Activated CD4-positive, alpha-beta memory T cell treated with anti-CD3 and anti-CD28 coated beads for 36 hours (primary cell): ENCODE measurements at regions of chr13 and their contacts with region 1.

Region 1: GRCh38 chr13:28138012-28138755 is at the start of gene PAN3:
- DNase-seq: peak; percentile 94
- H3K4me3 Mint-ChIP-seq: peak within 1 kb of the TSS; percentile 91
- H3K27ac Mint-ChIP-seq: peak within 1 kb of the TSS; percentile 98
- H3K4me1 Mint-ChIP-seq: peaks cover 41% of the 10 kb centered on the region
- H3K27me3 Mint-ChIP-seq: no peaks in the 10 kb centered on the region
- total RNA-seq, gene PAN3: 26.0 to 28.3 TPM

Region 2: DNA sequence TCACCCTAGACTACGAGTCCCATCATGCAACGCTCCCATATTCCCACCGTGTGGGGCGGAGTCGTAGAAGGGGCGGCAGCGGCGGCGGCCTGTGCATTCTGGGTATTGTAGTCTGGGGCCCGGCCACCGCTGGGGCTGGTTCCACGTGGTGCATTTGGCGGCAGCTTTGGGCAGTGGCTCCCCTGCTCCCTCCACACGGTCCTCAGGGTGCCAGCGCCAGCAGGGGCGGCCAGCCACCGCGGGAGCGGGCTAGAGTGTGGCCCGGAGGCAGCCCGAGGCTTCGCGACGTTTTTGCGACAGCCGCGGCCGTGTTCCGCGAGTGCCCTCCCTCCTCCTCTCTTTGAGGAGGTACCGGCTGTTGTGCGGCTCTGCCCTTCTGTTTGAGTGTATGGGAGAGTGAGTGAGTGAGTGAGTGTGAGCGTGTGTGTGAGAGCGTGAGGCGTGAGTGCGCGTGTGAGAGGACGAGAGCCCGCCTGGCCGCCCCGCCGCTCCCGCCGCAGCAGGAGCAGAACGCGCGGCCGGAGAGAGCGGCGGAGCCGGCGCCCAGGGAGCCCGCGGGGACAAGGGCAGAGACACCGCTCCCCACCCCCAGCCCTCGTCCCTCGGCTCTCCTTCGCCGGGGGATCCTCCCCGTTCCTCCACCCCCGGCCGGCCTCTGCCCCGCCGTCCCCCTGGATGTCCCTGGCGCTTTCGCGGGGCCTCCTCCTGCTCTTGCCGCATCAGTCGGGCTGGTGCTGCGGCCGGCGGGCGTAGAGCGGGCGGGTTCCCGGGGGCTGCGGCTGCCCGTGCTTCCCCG is 1884.2 kb before region 1 on chr13 and contains the start of gene CDK8:
- CTCF ChIA-PET with region 1: no interaction called
- POLR2A ChIA-PET with region 1: no interaction called
- intact Hi-C with region 1: loop called (anchors 5 kb)
- DNase-seq: peak; percentile 91
- H3K4me3 Mint-ChIP-seq: peak within 1 kb of the TSS; percentile 84
- H3K27ac Mint-ChIP-seq: peak within 1 kb of the TSS; percentile 67
- H3K4me1 Mint-ChIP-seq: peaks cover 37% of the 10 kb centered on the region
- H3K27me3 Mint-ChIP-seq: no peaks in the 10 kb centered on the region
- total RNA-seq, gene CDK8: 14.6 to 15.0 TPM

Region 3: GRCh38 chr13:27251166-27252091 is 886.8 kb before region 1 on chr13 and contains the start of gene RPL21:
- CTCF ChIA-PET with region 1: no interaction called
- POLR2A ChIA-PET with region 1: no interaction called
- intact Hi-C with region 1: loop called (anchors 5 kb)
- DNase-seq: peak; percentile 92
- H3K4me3 Mint-ChIP-seq: peak within 1 kb of the TSS; percentile 94
- H3K27ac Mint-ChIP-seq: peak within 1 kb of the TSS; percentile 95
- H3K4me1 Mint-ChIP-seq: peaks cover 48% of the 10 kb centered on the region
- H3K27me3 Mint-ChIP-seq: no peaks in the 10 kb centered on the region
- total RNA-seq, gene RPL21: 1,539 to 1,545 TPM

Region 4: GRCh38 chr13:27449936-27450828 is 688.0 kb before region 1 on chr13 and contains the start of gene MTIF3:
- CTCF ChIA-PET with region 1: no interaction called
- POLR2A ChIA-PET with region 1: no interaction called
- intact Hi-C with region 1: loop called (anchors 1 kb)
- DNase-seq: peak; percentile 97
- H3K4me3 Mint-ChIP-seq: peak within 1 kb of the TSS; percentile 90
- H3K27ac Mint-ChIP-seq: peak within 1 kb of the TSS; percentile 95
- H3K4me1 Mint-ChIP-seq: peaks cover 57% of the 10 kb centered on the region
- H3K27me3 Mint-ChIP-seq: no peaks in the 10 kb centered on the region
- total RNA-seq, gene MTIF3: 35.7 to 37.3 TPM

Region 5: DNA sequence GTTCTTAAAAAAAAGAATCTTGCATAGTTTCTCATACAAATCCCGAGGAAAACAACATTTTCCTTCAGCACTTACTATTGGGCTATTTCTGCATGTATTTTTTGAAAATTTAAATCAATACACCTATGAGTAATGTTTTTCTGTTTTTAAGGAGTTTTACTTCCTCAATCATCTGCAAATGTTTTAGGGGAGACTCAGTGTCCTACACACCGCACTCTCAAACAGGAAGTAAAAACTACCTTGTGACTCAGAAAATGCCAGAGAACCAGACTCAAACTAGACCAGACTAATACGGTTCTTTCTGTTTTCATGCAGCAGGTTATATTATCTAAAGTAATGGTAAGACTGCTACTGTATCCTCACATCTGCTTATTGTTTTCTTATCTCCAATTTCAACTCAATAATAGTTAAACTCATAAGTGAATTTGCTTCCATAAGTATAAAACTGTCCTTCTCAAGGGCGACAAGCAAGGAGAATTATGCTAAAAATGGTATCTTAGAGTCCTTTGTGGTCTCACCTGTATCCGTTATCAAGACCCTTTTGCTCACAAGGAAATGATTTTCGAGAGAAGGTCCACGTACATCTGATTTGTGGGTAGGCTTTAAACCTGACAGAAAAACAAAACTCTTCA is 90.3 kb before region 1 on chr13:
- CTCF ChIA-PET with region 1: no interaction called
- POLR2A ChIA-PET with region 1: no interaction called
- intact Hi-C with region 1: loop called (anchors 5 kb)
- DNase-seq: no peak
- H3K4me3 Mint-ChIP-seq: no peak overlapping the region
- H3K27ac Mint-ChIP-seq: no peak overlapping the region
- H3K4me1 Mint-ChIP-seq: peaks cover 20% of the 10 kb centered on the region
- H3K27me3 Mint-ChIP-seq: peaks cover 2% of the 10 kb centered on the region

Region 6: GRCh38 chr13:28077231-28077630 is 61.0 kb before region 1 on chr13:
- CTCF ChIA-PET with region 1: no interaction called
- POLR2A ChIA-PET with region 1: no interaction called
- intact Hi-C with region 1: no loop called
- DNase-seq: no peak
- H3K4me3 Mint-ChIP-seq: no peak overlapping the region
- H3K27ac Mint-ChIP-seq: no peak overlapping the region
- H3K4me1 Mint-ChIP-seq: no peaks in the 10 kb centered on the region
- H3K27me3 Mint-ChIP-seq: peaks cover 6% of the 10 kb centered on the region

Region 7: GRCh38 chr13:28181413-28181812 is 43.2 kb after region 1 on chr13:
- CTCF ChIA-PET with region 1: no interaction called
- POLR2A ChIA-PET with region 1: no interaction called
- intact Hi-C with region 1: no loop called
- DNase-seq: no peak
- H3K4me3 Mint-ChIP-seq: no peak overlapping the region
- H3K27ac Mint-ChIP-seq: no peak overlapping the region
- H3K4me1 Mint-ChIP-seq: peaks cover 21% of the 10 kb centered on the region
- H3K27me3 Mint-ChIP-seq: no peaks in the 10 kb centered on the region

Region 8: GRCh38 chr13:28204690-28205443 is 66.7 kb after region 1 on chr13:
- CTCF ChIA-PET with region 1: no interaction called
- POLR2A ChIA-PET with region 1: no interaction called
- intact Hi-C with region 1: loop called (anchors 1 kb)
- DNase-seq: peak; percentile 77
- H3K4me3 Mint-ChIP-seq: no peak overlapping the region
- H3K27ac Mint-ChIP-seq: no peak overlapping the region
- H3K4me1 Mint-ChIP-seq: peaks cover 32% of the 10 kb centered on the region
- H3K27me3 Mint-ChIP-seq: no peaks in the 10 kb centered on the region

Region 9: GRCh38 chr13:28658796-28659620 is 520.8 kb after region 1 on chr13 and contains the start of gene POMP:
- CTCF ChIA-PET with region 1: no interaction called
- POLR2A ChIA-PET with region 1: no interaction called
- intact Hi-C with region 1: loop called (anchors 2 kb)
- DNase-seq: peak; percentile 96
- H3K4me3 Mint-ChIP-seq: peak within 1 kb of the TSS; percentile 94
- H3K27ac Mint-ChIP-seq: peak within 1 kb of the TSS; percentile 98
- H3K4me1 Mint-ChIP-seq: peaks cover 51% of the 10 kb centered on the region
- H3K27me3 Mint-ChIP-seq: no peaks in the 10 kb centered on the region
- total RNA-seq, gene POMP: 123 to 125 TPM

Region 10: DNA sequence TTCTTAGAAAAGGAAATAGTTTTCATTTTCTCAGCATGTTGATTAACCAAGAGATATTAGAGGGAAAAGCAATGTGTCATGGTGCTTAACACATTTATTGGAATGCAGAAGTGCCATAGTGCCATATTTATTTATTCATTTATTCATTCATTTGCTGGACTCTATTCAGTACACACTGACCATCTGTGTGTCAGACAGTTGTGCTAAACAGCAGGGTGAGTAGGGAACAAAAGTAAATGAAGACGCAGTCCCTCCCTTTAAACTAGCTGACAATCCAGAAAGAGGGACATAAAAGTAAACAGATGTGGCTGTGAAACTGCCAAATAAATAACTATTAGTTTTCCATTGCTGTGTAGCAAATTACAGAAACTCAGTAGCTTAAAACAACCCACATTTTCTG is 1005.7 kb after region 1 on chr13:
- CTCF ChIA-PET with region 1: no interaction called
- POLR2A ChIA-PET with region 1: no interaction called
- intact Hi-C with region 1: no loop called
- DNase-seq: no peak
- H3K4me3 Mint-ChIP-seq: no peak overlapping the region
- H3K27ac Mint-ChIP-seq: no peak overlapping the region
- H3K4me1 Mint-ChIP-seq: no peaks in the 10 kb centered on the region
- H3K27me3 Mint-ChIP-seq: no peaks in the 10 kb centered on the region